Activated naive CD4-positive, alpha-beta T cell treated with anti-CD3 and anti-CD28 coated beads for 36 hours (primary cell): ENCODE measurements at regions of chr2 and their contacts with region 1.

Region 1: DNA sequence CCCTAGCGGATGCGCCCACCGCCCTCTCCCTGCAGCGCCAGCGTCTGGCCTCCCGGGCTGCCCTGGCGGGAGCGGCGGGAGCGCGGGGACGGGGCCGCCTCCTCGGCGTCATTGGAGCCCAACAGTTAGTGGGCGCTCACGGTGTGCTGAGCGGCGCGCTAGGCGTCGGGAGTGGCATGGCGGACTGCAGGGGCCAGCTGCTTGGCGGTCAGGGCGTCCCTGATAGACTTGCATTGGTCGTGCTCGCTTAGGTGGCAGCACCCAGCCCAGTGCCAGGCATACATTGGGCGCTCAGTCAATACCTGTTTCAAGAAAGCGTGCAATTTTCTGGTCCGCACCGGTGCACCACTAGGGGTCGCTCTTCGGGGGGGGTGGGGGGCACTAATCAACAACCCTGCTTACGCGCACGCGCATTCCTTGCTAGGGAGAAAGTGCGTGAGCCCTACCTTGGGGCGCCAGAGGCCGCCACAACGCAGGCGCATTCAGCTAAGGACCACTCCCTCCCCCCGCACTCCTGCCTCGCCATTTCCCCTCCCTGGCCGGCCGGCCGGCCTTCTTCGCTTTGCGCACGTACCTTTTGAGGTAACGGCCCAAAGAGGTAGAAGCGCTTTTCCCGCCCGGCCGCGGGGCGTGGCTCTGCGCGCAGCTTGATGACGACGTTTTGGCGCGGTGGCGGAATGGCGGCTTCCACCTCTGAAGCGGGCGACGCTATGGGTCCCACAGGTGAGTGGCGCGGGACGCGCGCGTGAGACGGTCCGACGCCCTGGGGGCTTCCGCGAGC is 411 bp upstream of the MZT2A start:
- DNase-seq: peak; percentile 95
- H3K4me3 Mint-ChIP-seq: peak overlapping the region; percentile 86
- H3K27ac Mint-ChIP-seq: peak overlapping the region; percentile 85
- H3K4me1 Mint-ChIP-seq: peaks cover 43% of the 10 kb centered on the region
- H3K27me3 Mint-ChIP-seq: no peaks in the 10 kb centered on the region

Region 2: DNA sequence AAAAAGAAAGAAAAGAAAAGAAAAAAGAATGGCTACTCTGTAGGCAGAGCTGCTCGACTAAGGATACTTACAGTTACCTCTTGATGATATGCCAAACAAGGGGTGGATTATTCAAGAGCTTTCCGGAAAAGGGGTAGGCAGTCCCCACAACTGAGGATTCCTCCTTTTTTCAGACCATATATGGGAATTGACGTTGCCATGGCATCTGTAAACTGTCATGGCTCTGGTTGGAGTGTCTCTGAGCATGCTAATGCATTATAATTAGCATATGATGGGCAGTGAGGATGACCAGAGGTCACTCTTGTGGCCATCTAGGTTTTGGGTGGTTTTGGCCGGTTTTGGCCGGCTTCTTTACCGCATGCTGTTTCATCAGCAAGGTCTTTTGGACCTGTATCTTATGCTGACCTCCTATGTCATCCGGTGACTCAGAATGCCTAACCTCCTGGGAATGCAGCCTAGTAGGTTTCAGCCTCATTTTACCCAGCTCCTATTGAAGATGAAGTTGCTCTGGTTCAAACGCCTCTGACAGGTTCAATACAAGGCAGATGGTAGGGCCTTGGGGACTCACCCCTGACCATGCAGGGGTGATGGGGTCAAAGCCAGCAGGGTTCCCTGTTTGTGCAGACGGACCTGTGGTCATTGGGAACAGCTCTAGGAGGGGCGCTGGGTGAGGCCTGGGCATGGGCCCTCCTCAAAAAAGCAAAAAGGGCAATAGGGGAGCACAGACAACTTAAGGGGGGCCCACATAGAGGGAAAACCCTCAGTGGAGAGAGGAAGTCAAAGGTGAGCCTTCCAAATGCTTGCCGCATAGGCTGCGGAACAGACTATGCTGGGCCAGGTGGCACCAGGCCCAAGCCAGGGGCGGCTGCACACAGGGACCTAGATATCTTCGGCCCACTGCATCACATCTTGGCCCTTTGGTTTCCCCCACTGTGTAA is 1764.3 kb before region 1 on chr2:
- CTCF ChIA-PET with region 1: no interaction called
- intact Hi-C with region 1: no loop called
- DNase-seq: no peak
- H3K4me3 Mint-ChIP-seq: no peak overlapping the region
- H3K27ac Mint-ChIP-seq: no peak overlapping the region
- H3K4me1 Mint-ChIP-seq: no peaks in the 10 kb centered on the region
- H3K27me3 Mint-ChIP-seq: peaks cover 2% of the 10 kb centered on the region

Region 3: GRCh38 chr2:130181325-130181879 is 1311.2 kb before region 1 on chr2 and contains the start of gene SMPD4:
- CTCF ChIA-PET with region 1: no interaction called
- intact Hi-C with region 1: loop called (anchors 2 kb)
- DNase-seq: peak; percentile 97
- H3K4me3 Mint-ChIP-seq: peak within 1 kb of the TSS; percentile 91
- H3K27ac Mint-ChIP-seq: peak within 1 kb of the TSS; percentile 94
- H3K4me1 Mint-ChIP-seq: peaks cover 31% of the 10 kb centered on the region
- H3K27me3 Mint-ChIP-seq: no peaks in the 10 kb centered on the region
- total RNA-seq, gene SMPD4: 70.8 to 71.5 TPM

Region 4: GRCh38 chr2:130824492-130825061 is 668.0 kb before region 1 on chr2:
- CTCF ChIA-PET with region 1: no interaction called
- intact Hi-C with region 1: loop called (anchors 2 kb)
- DNase-seq: peak; percentile 84
- H3K4me3 Mint-ChIP-seq: no peak overlapping the region
- H3K27ac Mint-ChIP-seq: peak overlapping the region; percentile 86
- H3K4me1 Mint-ChIP-seq: peaks cover 19% of the 10 kb centered on the region
- H3K27me3 Mint-ChIP-seq: peaks cover 4% of the 10 kb centered on the region

Region 5: DNA sequence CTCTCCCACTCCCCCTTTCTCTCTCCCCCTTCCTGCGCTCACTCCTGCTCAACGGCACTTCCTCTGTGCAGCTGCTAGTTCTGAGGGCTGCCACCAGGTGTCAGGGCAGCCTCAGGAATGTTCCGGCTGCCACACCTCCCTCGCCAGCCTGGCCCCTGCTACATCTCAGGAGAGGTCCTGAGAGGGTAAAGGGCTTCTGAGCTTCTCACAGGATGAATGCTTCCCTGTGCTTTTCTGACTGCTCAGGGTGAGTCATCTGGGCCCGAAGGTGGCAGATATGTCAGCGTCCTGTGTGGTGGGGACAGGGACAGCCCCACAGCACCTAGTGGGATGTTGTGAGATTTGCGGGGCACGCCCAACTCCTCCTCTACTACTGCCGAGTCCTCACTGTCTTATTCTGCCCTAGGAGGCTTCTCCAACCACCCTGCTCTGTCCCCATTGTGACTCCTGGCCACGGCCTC is 338.5 kb before region 1 on chr2:
- CTCF ChIA-PET with region 1: interaction called, 6 read pairs
- intact Hi-C with region 1: loop called (anchors 1 kb)
- DNase-seq: peak; percentile 93
- H3K4me3 Mint-ChIP-seq: no peak overlapping the region
- H3K27ac Mint-ChIP-seq: no peak overlapping the region
- H3K4me1 Mint-ChIP-seq: peaks cover 22% of the 10 kb centered on the region
- H3K27me3 Mint-ChIP-seq: no peaks in the 10 kb centered on the region

Region 6: DNA sequence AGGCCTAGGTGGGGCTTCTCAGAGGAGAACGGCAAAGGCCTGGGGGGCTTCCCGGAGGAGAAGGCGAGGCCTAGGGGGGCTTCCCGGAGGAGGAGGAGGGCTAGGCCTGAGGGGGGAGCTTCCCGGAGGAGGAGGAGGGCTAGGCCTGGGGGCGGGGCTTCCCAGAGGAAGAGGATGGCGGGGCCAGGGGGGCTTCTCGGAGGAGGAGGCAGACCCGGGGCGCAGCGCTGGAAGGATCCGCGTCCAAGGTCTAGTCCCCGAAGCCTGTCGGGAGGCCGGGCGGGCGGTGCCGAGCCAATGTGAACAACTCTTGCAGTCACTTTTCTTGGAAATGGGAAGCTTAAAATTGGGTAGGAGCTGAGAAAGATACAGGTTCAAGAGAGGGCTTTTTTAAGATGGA is 46.7 kb before region 1 on chr2:
- CTCF ChIA-PET with region 1: no interaction called
- intact Hi-C with region 1: loop called (anchors 2 kb)
- DNase-seq: no peak
- H3K4me3 Mint-ChIP-seq: no peak overlapping the region
- H3K27ac Mint-ChIP-seq: no peak overlapping the region
- H3K4me1 Mint-ChIP-seq: peaks cover 5% of the 10 kb centered on the region
- H3K27me3 Mint-ChIP-seq: peaks cover 12% of the 10 kb centered on the region

Region 7: GRCh38 chr2:131754929-131755720 is 262.5 kb after region 1 on chr2:
- CTCF ChIA-PET with region 1: no interaction called
- intact Hi-C with region 1: no loop called
- DNase-seq: no peak
- H3K4me3 Mint-ChIP-seq: no peak overlapping the region
- H3K27ac Mint-ChIP-seq: no peak overlapping the region
- H3K4me1 Mint-ChIP-seq: no peaks in the 10 kb centered on the region
- H3K27me3 Mint-ChIP-seq: no peaks in the 10 kb centered on the region

Region 8: DNA sequence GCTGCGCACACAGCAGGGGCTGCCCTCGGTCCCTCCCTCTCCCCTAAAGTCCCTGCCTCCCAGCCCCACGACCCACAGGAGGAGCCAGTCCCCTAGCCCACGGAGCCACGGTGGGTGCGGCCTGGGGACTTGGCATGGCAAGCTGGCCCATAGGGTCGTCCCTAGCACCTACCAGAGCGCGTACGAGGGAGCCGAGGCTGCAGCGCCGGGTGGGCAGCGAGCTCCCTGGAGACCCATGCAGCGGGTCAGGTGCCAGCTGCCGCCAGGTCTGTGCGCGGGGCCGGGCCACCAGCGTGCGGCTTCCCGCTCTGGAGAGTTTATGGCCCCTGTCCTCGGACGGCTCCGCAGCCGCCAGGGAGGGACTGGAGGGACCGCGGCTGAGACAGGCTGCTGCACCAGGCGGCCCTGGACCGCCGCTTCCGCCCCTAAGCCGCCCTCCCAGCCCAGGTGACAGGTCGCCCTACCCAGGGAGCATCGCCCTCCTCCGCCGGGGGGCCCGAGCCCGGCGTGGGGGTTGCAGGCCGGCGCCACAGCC is 308.7 kb after region 1 on chr2:
- CTCF ChIA-PET with region 1: no interaction called
- intact Hi-C with region 1: loop called (anchors 5 kb)
- DNase-seq: no peak
- H3K4me3 Mint-ChIP-seq: no peak overlapping the region
- H3K27ac Mint-ChIP-seq: no peak overlapping the region
- H3K4me1 Mint-ChIP-seq: no peaks in the 10 kb centered on the region
- H3K27me3 Mint-ChIP-seq: peaks cover 3% of the 10 kb centered on the region